ENCODE measurements at regions of chr2 and their contacts with region 1.

Region 1: DNA sequence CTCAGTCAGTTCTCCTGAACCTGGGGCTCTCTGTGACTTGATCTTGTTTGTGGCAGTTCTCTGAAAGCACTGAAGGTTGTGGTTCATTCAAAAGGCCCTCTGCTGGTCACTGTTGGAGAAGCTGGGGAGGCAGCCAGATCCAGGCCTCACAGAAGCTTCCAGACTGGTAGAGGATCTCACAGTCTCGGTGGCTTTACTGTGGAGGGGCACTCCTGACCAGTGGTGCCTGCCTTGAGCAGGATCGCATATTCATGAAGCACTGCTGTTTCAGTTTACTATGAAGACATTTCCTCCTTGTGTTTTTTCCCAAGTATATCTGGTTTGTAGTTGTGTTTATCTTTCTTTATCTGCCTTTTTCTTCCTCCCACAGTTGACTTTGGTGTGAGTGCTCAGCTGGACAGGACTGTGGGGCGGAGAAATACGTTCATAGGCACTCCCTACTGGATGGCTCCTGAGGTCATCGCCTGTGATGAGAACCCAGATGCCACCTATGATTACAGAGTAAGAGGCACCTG is 133.9 kb downstream of the MAP4K4 start:
- DNase-seq: no peak
- H3K4me3 ChIP-seq: no peak overlapping the region
- H3K27ac ChIP-seq: peak overlapping the region; percentile 76
- H3K4me1 ChIP-seq: peaks cover 41% of the 10 kb centered on the region
- H3K27me3 ChIP-seq: no peaks in the 10 kb centered on the region
- CTCF ChIP-seq: peak; percentile 44 to 78 (median 53)
- POLR2A ChIP-seq: no peak

Region 2: DNA sequence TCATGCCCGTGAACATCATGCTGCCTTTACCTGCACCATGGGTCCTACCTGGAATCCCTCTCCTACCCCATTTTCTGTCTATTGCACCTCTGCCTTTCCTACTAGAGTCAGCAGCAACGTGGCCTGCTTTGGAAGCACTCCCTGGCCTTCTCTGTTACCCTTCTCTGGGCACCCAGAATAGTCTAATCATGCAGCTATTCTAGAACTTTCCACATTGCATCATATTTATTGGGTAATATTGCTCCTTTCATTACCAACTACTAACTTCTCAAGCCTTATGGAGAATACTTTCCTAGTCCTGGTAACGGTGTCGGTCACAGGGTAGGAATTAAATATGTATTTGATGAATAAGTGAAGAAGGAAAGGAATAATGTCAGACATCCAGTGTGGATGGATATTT is 410.8 kb before region 1 on chr2:
- intact Hi-C with region 1: loop called (anchors 10 kb)
- DNase-seq: no peak
- H3K4me3 ChIP-seq: no peak overlapping the region
- H3K27ac ChIP-seq: no peak overlapping the region
- H3K4me1 ChIP-seq: no peaks in the 10 kb centered on the region
- H3K27me3 ChIP-seq: no peaks in the 10 kb centered on the region
- CTCF ChIP-seq: no peak
- POLR2A ChIP-seq: no peak

Region 3: DNA sequence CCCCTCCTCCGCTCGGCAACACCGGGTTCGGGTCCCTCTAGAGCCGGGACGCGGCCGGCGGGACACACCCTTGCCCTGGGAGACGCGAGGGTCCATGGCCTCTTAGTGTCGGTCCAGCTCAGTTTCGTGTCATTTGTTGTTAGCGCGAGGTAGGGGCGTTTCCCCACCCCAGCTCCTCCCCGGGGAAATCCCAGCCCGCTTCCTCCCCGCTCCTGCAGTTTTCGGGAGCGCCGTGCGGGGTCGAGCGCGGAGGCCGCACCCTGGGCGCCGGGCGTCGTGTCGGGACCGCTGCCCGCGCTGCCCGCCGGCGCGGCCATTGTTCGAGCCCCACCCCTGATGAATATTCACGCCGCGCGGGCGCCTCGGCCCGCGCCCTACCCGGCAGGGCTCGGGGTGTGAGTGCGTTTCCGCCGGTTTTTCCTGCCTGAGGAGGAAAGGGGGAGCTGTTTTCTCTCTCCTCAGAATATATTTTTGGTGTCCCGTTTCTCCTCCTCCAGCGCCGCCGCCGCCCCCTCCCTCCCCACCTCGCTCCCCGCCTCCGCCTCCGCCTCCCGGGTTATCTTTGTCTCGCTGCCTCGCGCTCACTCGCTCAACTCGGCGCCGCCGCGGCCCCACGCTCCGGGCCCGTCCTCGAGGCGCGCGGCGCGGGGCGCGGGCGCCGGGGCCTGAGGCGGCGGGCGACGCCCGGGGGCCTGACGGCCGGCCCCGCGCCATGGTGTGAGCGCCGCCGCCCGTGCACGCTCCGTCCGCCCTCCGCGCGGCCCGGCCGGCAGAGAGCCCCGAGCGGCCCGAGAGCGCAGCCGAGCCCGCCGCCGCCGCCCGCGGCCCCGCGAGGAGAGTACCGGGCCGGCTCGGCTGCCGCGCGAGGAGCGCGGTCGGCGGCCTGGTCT is 134.0 kb before region 1 on chr2 and contains the start of gene MAP4K4:
- intact Hi-C with region 1: loop called (anchors 10 kb)
- DNase-seq: no peak
- H3K4me3 ChIP-seq: peak within 1 kb of the TSS; percentile 70 to 80
- H3K27ac ChIP-seq: peak within 1 kb of the TSS; percentile 88
- H3K4me1 ChIP-seq: peaks cover 45% of the 10 kb centered on the region
- H3K27me3 ChIP-seq: no peaks in the 10 kb centered on the region
- CTCF ChIP-seq: peak in 2 of 3 experiments; percentile 9 to 27
- POLR2A ChIP-seq: no peak
- total RNA-seq, gene MAP4K4: 75.9 TPM

Measured in vagina (tissue), 2 donors.